CD8-positive, alpha-beta T cell (primary cell): ENCODE measurements at regions of chr3 and their contacts with region 1.

Region 1: DNA sequence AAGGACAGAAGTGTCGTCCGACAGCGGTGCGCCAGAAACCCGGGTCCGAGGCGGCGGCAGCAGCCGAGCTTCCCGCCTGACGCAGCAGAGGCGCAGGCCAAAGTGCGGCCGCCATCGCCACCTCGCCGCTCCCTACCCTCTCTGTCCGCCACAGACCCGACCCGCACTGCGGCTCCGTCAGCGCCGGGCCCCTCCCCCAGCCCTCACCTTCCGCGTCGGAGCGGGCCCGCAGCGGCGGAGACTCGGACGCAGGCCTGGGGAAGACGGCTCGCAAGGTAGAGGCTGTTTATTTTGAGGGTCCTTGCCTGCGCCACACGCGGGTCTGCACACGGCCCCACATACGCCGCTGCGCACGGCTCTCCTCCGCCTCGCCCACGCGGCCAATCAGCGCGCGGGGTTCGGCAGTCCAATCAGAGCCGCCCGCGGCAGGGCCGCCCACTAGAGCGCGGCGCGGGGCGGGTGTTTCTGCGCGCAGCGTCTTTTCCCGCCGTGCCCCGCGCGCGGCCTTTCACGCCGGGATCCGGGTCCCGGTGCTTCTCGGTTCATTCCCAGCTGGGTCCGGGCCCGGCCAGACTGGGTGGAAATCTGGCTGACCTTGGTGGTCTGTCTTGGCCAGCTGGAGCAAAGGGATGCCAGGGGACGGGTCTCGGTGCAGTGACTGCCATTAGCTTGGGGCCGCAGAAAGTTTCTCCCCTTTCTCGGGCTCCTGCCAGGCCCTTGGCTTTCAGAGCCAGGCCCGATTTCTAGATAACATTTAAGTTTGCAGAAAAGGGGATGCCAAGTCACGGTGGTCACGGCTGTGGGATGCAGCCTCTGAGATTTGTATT is at the start of gene CNBP:
- DNase-seq: peak; percentile 80 to 96 (median 92)
- ATAC-seq: peak; percentile 96
- H3K4me3 ChIP-seq: peak within 1 kb of the TSS; percentile 77 to 91
- H3K4me3 Mint-ChIP-seq: peak within 1 kb of the TSS; percentile 97
- H3K27ac ChIP-seq: peak within 1 kb of the TSS; percentile 93 to 99
- H3K27ac Mint-ChIP-seq: peak within 1 kb of the TSS; percentile 99
- H3K4me1 ChIP-seq: peaks cover 33% of the 10 kb centered on the region
- H3K4me1 Mint-ChIP-seq: peaks cover 40% of the 10 kb centered on the region
- H3K27me3 ChIP-seq: no peaks in the 10 kb centered on the region
- H3K27me3 Mint-ChIP-seq: no peaks in the 10 kb centered on the region
- CTCF ChIP-seq: no peak
- total RNA-seq, gene CNBP: 296 to 301 TPM

Region 2: DNA sequence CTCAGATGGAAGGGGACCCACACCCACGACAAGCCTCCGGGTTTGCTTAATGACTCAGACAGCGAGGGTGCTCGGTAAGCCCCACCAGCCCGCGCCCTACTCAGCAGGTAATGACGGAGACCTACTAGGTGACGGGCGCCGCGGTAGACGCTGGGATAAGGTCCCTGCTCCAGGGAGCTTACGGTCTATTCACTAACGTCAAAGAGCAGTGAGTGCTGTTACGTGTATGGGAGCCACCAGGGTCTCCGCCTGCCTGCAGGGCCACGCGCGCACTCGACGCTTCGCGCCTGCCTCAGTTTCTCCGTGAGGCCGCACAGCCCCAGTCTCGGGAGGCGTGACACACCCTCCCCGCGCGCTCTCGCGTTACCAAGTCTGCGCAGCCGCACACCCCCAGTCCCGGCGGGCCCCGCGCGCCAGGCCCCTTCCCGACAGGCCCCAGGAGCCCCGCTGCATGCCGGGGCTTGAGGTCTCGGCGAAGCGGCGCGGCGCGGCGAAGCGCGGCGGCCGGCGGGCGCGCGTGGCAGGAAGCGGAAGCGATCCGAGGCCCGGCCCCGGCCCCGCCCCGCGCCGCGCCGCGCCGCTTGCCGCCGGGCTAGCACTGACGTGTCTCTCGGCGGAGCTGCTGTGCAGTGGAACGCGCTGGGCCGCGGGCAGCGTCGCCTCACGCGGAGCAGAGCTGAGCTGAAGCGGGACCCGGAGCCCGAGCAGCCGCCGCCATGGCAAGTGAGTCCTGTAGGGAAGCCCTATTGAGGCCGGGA is 1131.8 kb before region 1 on chr3 and contains the start of gene SEC61A1:
- CTCF ChIA-PET with region 1: no interaction called
- POLR2A ChIA-PET with region 1: no interaction called
- intact Hi-C with region 1: loop called (anchors 5 to 10 kb)
- DNase-seq: peak; percentile 87 to 97 (median 95)
- ATAC-seq: peak; percentile 93
- H3K4me3 ChIP-seq: peak within 1 kb of the TSS; percentile 92 to 95
- H3K4me3 Mint-ChIP-seq: peak within 1 kb of the TSS; percentile 99
- H3K27ac ChIP-seq: peak within 1 kb of the TSS; percentile 78 to 85
- H3K27ac Mint-ChIP-seq: peak within 1 kb of the TSS; percentile 98
- H3K4me1 ChIP-seq: peaks cover 35% of the 10 kb centered on the region
- H3K4me1 Mint-ChIP-seq: peaks cover 43% of the 10 kb centered on the region
- H3K27me3 ChIP-seq: no peaks in the 10 kb centered on the region
- H3K27me3 Mint-ChIP-seq: no peaks in the 10 kb centered on the region
- CTCF ChIP-seq: no peak
- total RNA-seq, gene SEC61A1: 125 to 131 TPM

Region 3: DNA sequence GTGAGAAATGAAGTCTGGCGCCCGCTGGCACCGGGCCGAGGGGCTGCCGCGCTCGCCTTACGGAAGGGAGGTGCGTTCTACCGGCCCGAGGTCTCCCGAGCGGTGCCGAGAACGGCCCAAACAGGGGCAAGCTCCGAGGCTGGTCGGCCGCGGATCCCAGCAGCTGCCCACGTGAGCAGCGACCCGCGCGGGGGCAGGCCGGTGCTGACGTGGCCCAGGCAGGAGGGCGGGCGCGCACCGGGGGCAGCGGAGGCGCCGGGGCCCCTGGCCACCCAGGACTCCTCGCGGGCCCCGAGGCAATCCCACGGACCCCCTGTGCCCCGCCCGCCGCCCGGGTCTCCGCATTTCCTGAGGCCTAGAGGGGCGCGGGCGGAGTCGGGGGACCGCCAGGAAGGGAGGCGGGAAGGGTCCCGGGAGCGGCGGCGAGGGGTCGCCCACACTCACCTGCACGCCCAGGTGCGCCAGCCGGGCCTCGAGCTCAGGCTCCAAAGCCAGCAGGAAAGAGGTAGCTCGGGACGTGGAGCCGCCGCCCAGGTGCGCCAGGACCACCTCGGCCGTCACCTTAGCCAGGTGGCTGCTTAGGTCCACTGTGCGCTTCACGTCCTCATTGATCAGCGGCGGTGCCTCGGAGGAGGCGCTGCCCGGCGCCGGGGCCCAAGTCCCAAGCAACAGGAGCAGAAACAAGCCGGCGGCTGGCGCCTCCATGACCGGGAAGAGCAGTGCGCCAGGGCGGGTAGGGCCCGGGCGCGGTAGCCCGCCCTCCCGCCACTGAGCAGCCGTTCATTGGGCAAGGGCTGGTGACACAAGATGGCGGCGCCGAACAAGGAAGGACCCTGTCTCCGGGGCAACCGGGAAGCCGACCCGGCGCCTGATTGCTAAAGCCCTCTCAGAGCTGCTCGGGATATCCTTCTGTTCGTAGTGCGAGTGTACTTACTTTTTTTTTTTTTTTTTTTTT is 533.4 kb before region 1 on chr3 and contains the start of gene RPN1:
- CTCF ChIA-PET with region 1: no interaction called
- POLR2A ChIA-PET with region 1: no interaction called
- intact Hi-C with region 1: loop called (anchors 5 to 10 kb)
- DNase-seq: peak; percentile 90 to 97 (median 95)
- ATAC-seq: peak; percentile 96
- H3K4me3 ChIP-seq: peak within 1 kb of the TSS; percentile 97
- H3K4me3 Mint-ChIP-seq: peak within 1 kb of the TSS; percentile 82
- H3K27ac ChIP-seq: peak within 1 kb of the TSS; percentile 95 to 96
- H3K27ac Mint-ChIP-seq: peak within 1 kb of the TSS; percentile 88
- H3K4me1 ChIP-seq: peaks cover 24% of the 10 kb centered on the region
- H3K4me1 Mint-ChIP-seq: peaks cover 47% of the 10 kb centered on the region
- H3K27me3 ChIP-seq: no peaks in the 10 kb centered on the region
- H3K27me3 Mint-ChIP-seq: no peaks in the 10 kb centered on the region
- CTCF ChIP-seq: no peak
- total RNA-seq, gene RPN1: 65.7 to 76.5 TPM

Region 4: GRCh38 chr3:129016356-129016719 is 167.4 kb before region 1 on chr3:
- CTCF ChIA-PET with region 1: no interaction called
- POLR2A ChIA-PET with region 1: interaction called, 15 read pairs
- intact Hi-C with region 1: no loop called
- DNase-seq: peak in 8 of 9 experiments; percentile 48 to 91 (median 74)
- ATAC-seq: peak; percentile 86
- H3K4me3 ChIP-seq: peak overlapping the region; percentile 40 to 41
- H3K4me3 Mint-ChIP-seq: peak overlapping the region; percentile 73
- H3K27ac ChIP-seq: peak overlapping the region; percentile 49 to 87
- H3K27ac Mint-ChIP-seq: peak overlapping the region; percentile 92
- H3K4me1 ChIP-seq: peaks cover 41% of the 10 kb centered on the region
- H3K4me1 Mint-ChIP-seq: peaks cover 44% of the 10 kb centered on the region
- H3K27me3 ChIP-seq: no peaks in the 10 kb centered on the region
- H3K27me3 Mint-ChIP-seq: no peaks in the 10 kb centered on the region
- CTCF ChIP-seq: peak; percentile 38

Region 5: GRCh38 chr3:129120254-129121004 is 63.4 kb before region 1 on chr3:
- CTCF ChIA-PET with region 1: interaction called, 4 read pairs
- POLR2A ChIA-PET with region 1: interaction called, 55 read pairs
- intact Hi-C with region 1: loop called (anchors 1 kb)
- DNase-seq: peak; percentile 79 to 97 (median 92)
- ATAC-seq: peak; percentile 51
- H3K4me3 ChIP-seq: peak overlapping the region; percentile 85 to 93
- H3K4me3 Mint-ChIP-seq: peak overlapping the region; percentile 94
- H3K27ac ChIP-seq: peak overlapping the region; percentile 74
- H3K27ac Mint-ChIP-seq: peak overlapping the region; percentile 99
- H3K4me1 ChIP-seq: peaks cover 33% of the 10 kb centered on the region
- H3K4me1 Mint-ChIP-seq: peaks cover 59% of the 10 kb centered on the region
- H3K27me3 ChIP-seq: no peaks in the 10 kb centered on the region
- H3K27me3 Mint-ChIP-seq: no peaks in the 10 kb centered on the region
- CTCF ChIP-seq: peak; percentile 26

Region 6: DNA sequence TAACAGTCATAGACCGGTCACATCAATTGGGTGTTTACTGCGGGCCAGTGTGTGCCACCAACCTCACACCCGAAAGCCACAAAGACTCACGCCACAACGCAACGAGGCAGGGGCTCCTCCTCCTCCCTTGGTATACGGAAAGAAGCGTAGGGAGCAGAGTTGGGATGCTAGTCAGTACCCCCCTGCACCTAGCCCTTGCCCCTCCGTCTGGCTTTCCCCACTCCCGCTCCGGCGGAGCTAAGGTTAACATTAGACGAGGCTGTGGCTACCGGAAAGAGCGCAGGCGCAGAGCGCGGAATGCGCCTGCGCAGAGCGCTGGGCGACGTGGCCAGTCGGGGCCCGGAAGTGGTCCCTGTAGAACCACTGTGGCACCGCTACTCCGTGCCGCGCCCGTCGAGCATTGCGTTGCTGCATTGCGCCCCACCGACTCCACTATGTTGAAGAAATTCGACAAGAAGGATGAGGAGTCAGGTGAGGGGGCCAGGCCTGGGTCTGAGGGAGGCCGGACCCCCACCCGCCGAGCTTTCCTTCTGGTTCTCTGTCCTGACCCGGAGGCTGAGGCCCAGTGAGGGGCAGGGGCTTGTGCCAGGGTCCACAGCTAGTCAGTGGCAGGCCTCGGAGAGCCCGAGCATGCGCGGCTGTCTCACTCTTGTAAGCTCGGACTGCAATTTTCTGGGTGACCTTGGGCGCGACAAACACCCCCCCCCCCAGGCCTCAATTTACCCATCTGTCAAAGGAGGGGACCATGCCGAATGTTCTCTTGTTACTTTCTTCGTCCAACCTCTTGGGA is 65.7 kb after region 1 on chr3 and contains the start of gene COPG1:
- CTCF ChIA-PET with region 1: interaction called, 8 read pairs
- POLR2A ChIA-PET with region 1: interaction called, 3 read pairs
- intact Hi-C with region 1: loop called (anchors 2 kb)
- DNase-seq: peak; percentile 72 to 95 (median 85)
- ATAC-seq: peak; percentile 83
- H3K4me3 ChIP-seq: peak within 1 kb of the TSS; percentile 80 to 87
- H3K4me3 Mint-ChIP-seq: peak within 1 kb of the TSS; percentile 96
- H3K27ac ChIP-seq: peak within 1 kb of the TSS; percentile 83 to 89
- H3K27ac Mint-ChIP-seq: peak within 1 kb of the TSS; percentile 96
- H3K4me1 ChIP-seq: peaks cover 31% of the 10 kb centered on the region
- H3K4me1 Mint-ChIP-seq: peaks cover 49% of the 10 kb centered on the region
- H3K27me3 ChIP-seq: no peaks in the 10 kb centered on the region
- H3K27me3 Mint-ChIP-seq: no peaks in the 10 kb centered on the region
- CTCF ChIP-seq: no peak
- total RNA-seq, gene COPG1: 77.0 to 93.5 TPM

Region 7: GRCh38 chr3:129439817-129440617 is 256.2 kb after region 1 on chr3 and contains the starts of genes IFT122 and MBD4:
- CTCF ChIA-PET with region 1: no interaction called
- POLR2A ChIA-PET with region 1: no interaction called
- intact Hi-C with region 1: loop called (anchors 5 kb)
- DNase-seq: peak; percentile 97 to 100 (median 98)
- ATAC-seq: peak; percentile 82
- H3K4me3 ChIP-seq: peak within 1 kb of the TSS; percentile 87 to 99
- H3K4me3 Mint-ChIP-seq: peak within 1 kb of the TSS; percentile 96
- H3K27ac ChIP-seq: peak within 1 kb of the TSS; percentile 92 to 93
- H3K27ac Mint-ChIP-seq: peak within 1 kb of the TSS; percentile 98
- H3K4me1 ChIP-seq: peaks cover 34% of the 10 kb centered on the region
- H3K4me1 Mint-ChIP-seq: peaks cover 70% of the 10 kb centered on the region
- H3K27me3 ChIP-seq: no peaks in the 10 kb centered on the region
- H3K27me3 Mint-ChIP-seq: no peaks in the 10 kb centered on the region
- CTCF ChIP-seq: no peak
- total RNA-seq, gene IFT122: 14.7 to 16.9 TPM
- total RNA-seq, gene MBD4: 48.5 to 51.8 TPM